ENCODE measurements at regions of chr2 and their contacts with region 1.

Region 1: DNA sequence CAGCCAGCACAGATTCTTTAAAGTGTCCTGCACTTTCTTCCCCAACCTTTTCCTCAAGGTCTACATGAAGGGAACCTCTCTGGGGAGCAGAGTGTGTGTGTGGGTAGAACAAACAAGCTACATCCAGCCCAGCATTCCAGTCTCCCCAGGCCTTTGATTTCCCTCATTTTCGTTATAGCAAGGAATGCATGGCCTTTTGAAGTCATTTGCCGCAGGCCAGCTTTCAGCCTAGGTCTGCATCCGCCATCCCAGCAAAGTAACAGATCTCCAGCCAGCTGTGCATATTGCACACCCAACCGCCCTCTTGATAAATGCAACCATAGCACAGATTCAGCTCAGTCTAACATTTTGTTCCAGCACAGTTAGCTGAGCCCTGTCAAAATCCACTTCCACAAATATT is 44.6 kb downstream of the CD8B2 start:
- DNase-seq: no peak
- CTCF ChIP-seq: no peak

Region 2: DNA sequence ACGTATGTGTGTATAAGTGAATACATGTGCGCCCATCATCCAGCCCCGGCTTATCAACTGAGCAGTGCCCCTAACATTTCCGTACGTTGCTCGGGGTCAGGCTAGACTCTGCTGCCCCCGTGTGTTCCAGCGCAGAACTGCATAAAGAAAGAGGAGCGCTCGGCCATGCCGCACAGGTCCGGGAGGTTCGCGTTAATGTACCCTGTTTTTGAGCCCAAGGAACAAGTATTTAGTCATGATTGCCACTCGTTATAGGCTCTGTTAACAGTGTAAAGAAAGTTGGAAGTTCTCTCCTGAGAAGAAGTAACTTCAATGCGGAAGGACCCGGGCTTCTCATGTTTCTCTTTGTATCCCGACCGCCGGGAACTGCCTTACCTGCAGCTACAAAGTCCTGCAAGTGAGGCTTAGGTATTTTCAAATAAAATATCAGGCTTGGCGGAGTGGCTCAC is 11.1 kb after region 1 on chr2:
- CTCF ChIA-PET with region 1: interaction called, 28 read pairs
- POLR2A ChIA-PET with region 1: no interaction called
- DNase-seq: peak; percentile 78
- CTCF ChIP-seq: peak; percentile 91

Region 3: GRCh38 chr2:106607371-106607770 is 75.6 kb after region 1 on chr2:
- CTCF ChIA-PET with region 1: no interaction called
- POLR2A ChIA-PET with region 1: no interaction called
- DNase-seq: no peak
- CTCF ChIP-seq: no peak

Measured in GM10248 (cell line).